Uterus (tissue), 4 donors: ENCODE measurements at regions of chr4 and their contacts with region 1.

Region 1: DNA sequence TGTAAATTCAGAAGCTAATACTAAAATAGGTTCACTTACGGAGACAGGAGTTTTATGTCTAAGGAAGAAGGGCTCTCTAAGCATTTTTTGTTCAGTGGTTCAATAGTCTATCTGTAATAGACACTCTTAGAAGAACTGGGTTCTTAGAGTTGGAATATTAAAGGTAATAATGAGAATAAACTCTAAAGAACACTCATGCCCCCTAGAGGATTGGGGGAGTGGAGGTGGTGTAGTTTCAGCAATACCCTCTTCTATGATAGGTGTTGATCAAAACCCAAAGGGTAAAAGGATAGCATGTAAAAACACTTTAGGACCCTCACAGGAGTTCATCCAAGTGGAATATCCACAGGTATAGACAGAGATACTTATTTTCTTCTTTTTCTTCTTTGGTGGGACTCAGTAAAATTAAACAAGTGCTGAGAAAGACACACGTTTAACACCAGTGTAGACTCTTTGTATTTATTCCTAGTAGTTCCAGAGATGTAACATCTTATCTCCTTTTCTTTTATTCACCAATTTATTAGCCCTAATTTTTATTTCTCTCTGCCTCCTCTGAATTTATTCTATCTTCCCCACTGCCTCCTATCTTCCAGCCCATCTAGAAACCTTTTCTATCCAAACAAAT is 25.7 kb upstream of the MND1 start:
- DNase-seq: peak in 1 of 2 donors; percentile 39
- H3K4me3 ChIP-seq: no peak overlapping the region
- H3K27ac ChIP-seq: no peak overlapping the region
- H3K4me1 ChIP-seq: no peaks in the 10 kb centered on the region
- H3K27me3 ChIP-seq: no peaks in the 10 kb centered on the region
- CTCF ChIP-seq: peak; percentile 60 to 72 (median 66)
- POLR2A ChIP-seq: no peak

Region 2: DNA sequence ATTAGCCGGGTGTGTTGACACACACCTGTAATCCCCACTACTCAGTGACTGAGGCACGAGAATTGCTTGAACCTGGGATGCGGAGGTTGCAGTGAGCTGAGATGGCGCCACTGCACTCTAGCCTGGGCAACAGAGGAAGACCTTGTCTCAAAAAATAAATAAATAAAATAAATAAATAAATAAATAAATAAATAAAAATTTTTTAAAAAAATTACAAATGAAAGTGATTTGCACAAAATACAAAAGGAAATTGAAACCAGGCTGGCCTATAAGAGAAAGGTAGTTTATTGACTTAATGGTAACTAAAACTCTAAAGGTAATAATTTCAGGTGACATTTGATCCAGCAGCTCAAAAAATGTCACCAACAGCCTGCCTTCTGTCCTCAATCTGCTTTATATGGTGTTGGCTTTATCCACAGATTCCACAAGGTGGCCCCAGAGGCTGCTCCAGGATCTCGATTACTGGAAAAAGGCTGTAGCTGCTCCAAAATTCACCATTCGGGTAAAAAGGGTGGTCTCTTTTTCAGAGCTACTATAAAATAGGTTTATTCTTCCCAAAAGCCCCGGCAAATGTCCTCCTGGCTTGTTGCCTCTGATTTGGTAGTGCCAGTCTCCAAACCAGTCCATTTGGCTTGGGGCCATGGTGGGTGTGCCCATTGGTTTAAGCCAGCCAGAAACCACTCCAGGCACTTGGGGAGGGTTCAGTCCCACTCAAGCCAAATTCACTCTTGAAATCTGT is 175.9 kb before region 1 on chr4:
- intact Hi-C with region 1: loop called (anchors 5 kb)
- DNase-seq: peak; percentile 65 to 69
- H3K4me3 ChIP-seq: no peak overlapping the region
- H3K27ac ChIP-seq: no peak overlapping the region
- H3K4me1 ChIP-seq: no peaks in the 10 kb centered on the region
- H3K27me3 ChIP-seq: no peaks in the 10 kb centered on the region
- CTCF ChIP-seq: peak; percentile 78 to 90 (median 80)
- POLR2A ChIP-seq: no peak